OCI-LY7 (cell line): ENCODE measurements at regions of chr17 and their contacts with region 1.

Region 1: GRCh38 chr17:68089887-68090286 is 54.4 kb downstream of the KPNA2 start:
- DNase-seq: no peak
- H3K4me3 ChIP-seq: no peak overlapping the region
- H3K27ac ChIP-seq: no peak overlapping the region
- H3K4me1 ChIP-seq: peaks cover 46% of the 10 kb centered on the region
- CTCF ChIP-seq: no peak; the same call in 1 of the 2 replicates

Region 2: GRCh38 chr17:66885395-66885794 is 1204.5 kb before region 1 on chr17:
- CTCF ChIA-PET with region 1: no interaction called
- POLR2A ChIA-PET with region 1: no interaction called
- intact Hi-C with region 1: no loop called
- DNase-seq: no peak
- H3K4me3 ChIP-seq: no peak overlapping the region
- H3K27ac ChIP-seq: no peak overlapping the region
- H3K4me1 ChIP-seq: no peaks in the 10 kb centered on the region
- CTCF ChIP-seq: no peak

Region 3: DNA sequence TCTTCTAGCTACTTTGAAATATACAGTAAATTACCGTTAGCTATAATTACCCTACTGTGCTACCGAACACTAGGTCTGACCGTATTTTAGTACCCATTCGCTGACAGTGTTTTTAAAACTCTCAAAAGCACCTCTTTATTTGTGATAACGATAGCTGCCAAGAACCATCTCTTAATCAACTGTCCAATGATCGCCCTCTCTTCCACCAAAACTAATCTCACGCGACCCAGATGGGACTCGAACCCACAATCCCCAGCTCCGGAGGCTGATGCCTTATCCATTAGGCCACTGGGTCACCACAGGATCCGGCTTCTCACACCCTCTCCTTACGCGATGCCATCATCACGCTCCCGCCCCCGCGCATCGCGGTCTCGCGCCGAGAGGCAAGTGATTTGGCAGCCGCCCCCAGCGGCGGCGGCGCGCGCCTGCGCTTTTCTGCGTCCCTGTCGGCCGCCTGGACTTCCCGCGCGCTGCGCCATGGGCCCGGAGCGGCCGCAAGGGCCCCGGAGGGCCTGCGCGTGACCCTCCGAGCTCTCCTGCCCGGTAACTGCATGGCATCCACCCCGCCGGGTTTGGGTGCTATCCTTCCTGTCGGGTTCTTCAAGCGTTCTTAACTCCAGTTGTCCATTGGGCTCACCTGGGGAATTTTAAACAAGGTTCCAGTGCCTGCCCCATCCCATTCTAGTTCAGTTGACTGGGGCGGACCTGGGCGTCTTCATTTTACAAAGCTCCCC is 70.0 kb before region 1 on chr17:
- CTCF ChIA-PET with region 1: no interaction called
- POLR2A ChIA-PET with region 1: interaction called, 8 read pairs
- intact Hi-C with region 1: loop called (anchors 5 kb)
- DNase-seq: peak; percentile 99
- H3K4me3 ChIP-seq: peak overlapping the region; percentile 72
- H3K27ac ChIP-seq: peak overlapping the region; percentile 46
- H3K4me1 ChIP-seq: peaks cover 16% of the 10 kb centered on the region
- CTCF ChIP-seq: peak; percentile 68